ENCODE measurements at regions of chr9 and their contacts with region 1.

Region 1: GRCh38 chr9:109411798-109412352 is 86.2 kb downstream of the PTPN3 start:
- H3K4me3 ChIP-seq: no peak overlapping the region
- H3K27ac ChIP-seq: no peak overlapping the region
- H3K4me1 ChIP-seq: no peaks in the 10 kb centered on the region
- CTCF ChIP-seq: peak; percentile 16; the same call in 1 of the 2 replicates

Region 2: GRCh38 chr9:109401168-109401989 is 10.5 kb before region 1 on chr9:
- CTCF ChIA-PET with region 1: interaction called, 10 read pairs
- POLR2A ChIA-PET with region 1: interaction called, 3 read pairs
- H3K4me3 ChIP-seq: no peak overlapping the region
- H3K27ac ChIP-seq: no peak overlapping the region
- H3K4me1 ChIP-seq: no peaks in the 10 kb centered on the region
- CTCF ChIP-seq: peak; percentile 77

Region 3: GRCh38 chr9:109422641-109423040 is 10.8 kb after region 1 on chr9:
- CTCF ChIA-PET with region 1: interaction called, 14 read pairs
- POLR2A ChIA-PET with region 1: no interaction called
- H3K4me3 ChIP-seq: no peak overlapping the region
- H3K27ac ChIP-seq: no peak overlapping the region
- H3K4me1 ChIP-seq: no peaks in the 10 kb centered on the region
- CTCF ChIP-seq: no peak

Measured in HEK293 (cell line).